Aorta (tissue), 5 donors: ENCODE measurements at regions of chr20 and their contacts with region 1.

Region 1: GRCh38 chr20:8389381-8390036 is 257.4 kb downstream of the PLCB1 start:
- DNase-seq: no peak
- ATAC-seq: peak; percentile 79
- H3K4me3 ChIP-seq: no peak overlapping the region
- H3K27ac ChIP-seq: no peak overlapping the region
- H3K4me1 ChIP-seq: no peaks in the 10 kb centered on the region
- H3K27me3 ChIP-seq: no peaks in the 10 kb centered on the region

Region 2: GRCh38 chr20:8043687-8044282 is 345.7 kb before region 1 on chr20:
- intact Hi-C with region 1: loop called (anchors 5 to 10 kb)
- DNase-seq: no peak
- ATAC-seq: peak; percentile 71
- H3K4me3 ChIP-seq: no peak overlapping the region
- H3K27ac ChIP-seq: no peak overlapping the region
- H3K4me1 ChIP-seq: no peaks in the 10 kb centered on the region
- H3K27me3 ChIP-seq: no peaks in the 10 kb centered on the region

Region 3: DNA sequence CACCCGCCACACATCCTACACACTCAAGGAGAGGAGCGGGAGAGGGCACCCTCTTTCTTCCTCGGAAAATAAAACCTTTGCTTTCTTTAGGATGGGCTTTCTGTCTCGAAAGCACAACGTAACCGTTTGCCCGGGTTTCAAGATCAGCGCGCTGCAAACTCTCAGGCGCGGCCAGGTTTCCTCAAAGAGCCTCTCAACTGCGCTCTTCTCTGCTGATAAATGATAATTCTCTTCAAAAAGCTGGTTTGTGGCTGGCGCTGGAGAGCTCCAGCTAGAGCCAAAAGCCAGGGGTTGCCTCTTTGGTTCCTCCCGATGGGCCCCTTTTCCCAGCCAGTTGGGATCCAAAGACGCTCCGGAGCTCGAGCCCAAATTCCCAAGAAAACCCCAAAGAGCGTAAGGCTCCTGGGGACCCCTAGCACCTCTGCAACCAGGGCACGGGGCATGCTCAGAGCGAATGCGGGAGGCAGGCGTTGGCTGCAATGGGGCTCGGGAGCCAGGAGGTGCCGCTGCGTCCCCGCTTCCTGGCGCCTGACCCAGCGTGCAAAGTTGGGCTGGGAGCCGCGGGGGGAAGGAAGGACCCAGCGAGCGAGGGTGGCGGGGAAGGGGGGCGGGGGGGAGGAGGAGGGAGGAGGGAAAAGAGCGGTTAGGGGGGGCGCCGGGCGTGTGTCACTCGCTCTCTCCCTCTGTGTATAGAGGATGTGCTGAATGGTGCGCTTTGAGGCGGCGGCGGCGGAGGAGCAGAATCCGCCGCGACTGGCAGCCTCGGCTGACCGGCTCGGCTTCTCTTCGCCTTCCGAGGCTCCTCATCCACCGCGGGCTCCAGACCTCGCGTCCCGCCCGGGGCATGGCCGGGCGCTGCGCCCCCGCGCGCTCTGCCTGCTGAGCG is 257.7 kb before region 1 on chr20 and contains the start of gene PLCB1:
- intact Hi-C with region 1: loop called (anchors 5 kb)
- DNase-seq: peak; percentile 83 to 93
- ATAC-seq: peak; percentile 96
- H3K4me3 ChIP-seq: peak within 1 kb of the TSS; percentile 31
- H3K27ac ChIP-seq: no peak within 1 kb of the TSS
- H3K4me1 ChIP-seq: no peaks in the 10 kb centered on the region
- H3K27me3 ChIP-seq: no peaks in the 10 kb centered on the region
- total RNA-seq, gene PLCB1: 10.7 to 35.0 TPM